Endothelial cell of umbilical vein (primary cell): ENCODE measurements at regions of chr3 and their contacts with region 1.

Region 1: DNA sequence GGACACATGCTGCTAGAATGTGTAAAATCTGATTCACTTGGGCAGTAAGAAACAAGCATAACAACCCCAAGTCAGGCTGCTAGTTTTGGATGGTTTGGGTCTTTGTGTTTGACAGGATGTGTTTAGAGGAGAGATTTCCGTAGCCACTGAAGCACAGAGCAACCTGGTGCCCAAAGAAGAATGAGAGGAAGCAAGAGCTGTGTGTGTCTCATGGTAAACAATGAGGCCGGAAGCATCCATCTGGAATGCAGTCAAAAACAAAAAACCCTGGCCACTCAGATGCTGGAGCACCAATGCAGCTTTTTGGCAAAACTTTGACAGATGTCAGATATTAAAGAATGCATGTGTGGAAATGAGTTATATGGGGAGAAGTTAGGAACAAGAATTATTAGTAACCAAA is 39.4 kb upstream of the SNRK start:
- DNase-seq: peak; percentile 97
- H3K4me3 ChIP-seq: no peak overlapping the region
- H3K27ac ChIP-seq: peak overlapping the region; percentile 99
- H3K4me1 ChIP-seq: peaks cover 47% of the 10 kb centered on the region
- H3K27me3 ChIP-seq: no peaks in the 10 kb centered on the region
- CTCF ChIP-seq: no peak
- POLR2A ChIP-seq: peak; percentile 55

Region 2: DNA sequence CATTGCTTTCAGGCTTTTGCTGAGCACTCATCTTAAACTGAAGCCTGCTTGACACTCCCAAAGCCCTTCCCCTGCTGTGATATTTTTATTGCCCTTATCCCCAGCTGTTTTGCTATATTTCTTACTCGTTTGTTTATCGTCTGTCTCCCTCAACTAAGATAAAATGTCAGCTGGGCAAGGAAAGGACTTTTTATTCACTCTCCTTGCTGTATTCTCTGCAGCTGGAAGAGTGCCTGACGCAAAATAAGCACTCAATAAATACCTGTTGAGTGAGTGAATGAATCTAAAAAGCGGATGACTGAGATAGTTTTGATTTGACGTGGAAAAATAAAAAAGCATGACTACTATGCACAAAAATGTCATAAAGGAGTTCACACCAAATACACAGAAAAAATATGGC is 56.3 kb before region 1 on chr3:
- CTCF ChIA-PET with region 1: interaction called, 4 read pairs
- POLR2A ChIA-PET with region 1: interaction called, 3 read pairs
- dilution Hi-C with region 1: no loop called
- intact Hi-C with region 1: loop called (anchors 2 kb)
- DNase-seq: peak; percentile 52
- H3K4me3 ChIP-seq: no peak overlapping the region
- H3K27ac ChIP-seq: peak overlapping the region; percentile 90
- H3K4me1 ChIP-seq: peaks cover 67% of the 10 kb centered on the region
- H3K27me3 ChIP-seq: no peaks in the 10 kb centered on the region
- CTCF ChIP-seq: no peak
- POLR2A ChIP-seq: no peak